ENCODE measurements at regions of chr22 and their contacts with region 1.

Region 1: GRCh38 chr22:29275819-29276565 is 7.9 kb downstream of the EWSR1 start:
- DNase-seq: no peak
- H3K4me3 ChIP-seq: no peak overlapping the region
- H3K27ac ChIP-seq: peak overlapping the region; percentile 12
- H3K4me1 ChIP-seq: peaks cover 32% of the 10 kb centered on the region
- H3K27me3 ChIP-seq: no peaks in the 10 kb centered on the region
- CTCF ChIP-seq: no peak

Region 2: GRCh38 chr22:29117799-29118477 is 158.1 kb before region 1 on chr22:
- CTCF ChIA-PET with region 1: no interaction called
- POLR2A ChIA-PET with region 1: interaction called, 11 read pairs
- intact Hi-C with region 1: no loop called
- DNase-seq: peak; percentile 48
- H3K4me3 ChIP-seq: no peak overlapping the region
- H3K27ac ChIP-seq: no peak overlapping the region
- H3K4me1 ChIP-seq: no peaks in the 10 kb centered on the region
- H3K27me3 ChIP-seq: no peaks in the 10 kb centered on the region
- CTCF ChIP-seq: no peak

Region 3: DNA sequence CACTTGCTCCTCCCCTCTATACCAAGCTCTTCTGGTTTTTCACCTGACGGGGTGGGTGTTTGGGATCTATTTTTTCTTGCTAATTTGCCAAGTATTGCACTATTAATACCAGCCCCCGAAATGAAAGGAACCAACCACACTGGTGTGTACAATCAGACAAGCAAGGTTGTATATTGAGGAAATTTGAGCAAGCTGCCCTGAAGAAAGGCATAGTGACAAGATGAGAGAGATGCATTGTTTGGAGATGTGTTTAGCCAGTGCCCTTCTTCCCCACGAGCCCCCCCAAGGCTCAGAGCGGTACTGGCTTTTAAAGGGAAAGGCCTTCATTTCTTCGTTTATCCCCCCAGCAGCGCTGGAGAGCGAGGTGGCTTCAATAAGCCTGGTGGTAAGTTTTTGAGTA is 15.2 kb after region 1 on chr22:
- CTCF ChIA-PET with region 1: no interaction called
- POLR2A ChIA-PET with region 1: interaction called, 15 read pairs
- intact Hi-C with region 1: no loop called
- DNase-seq: no peak
- H3K4me3 ChIP-seq: no peak overlapping the region
- H3K27ac ChIP-seq: no peak overlapping the region
- H3K4me1 ChIP-seq: no peaks in the 10 kb centered on the region
- H3K27me3 ChIP-seq: no peaks in the 10 kb centered on the region
- CTCF ChIP-seq: no peak